B cell (primary cell): ENCODE measurements at regions of chr17 and their contacts with region 1.

Region 1: DNA sequence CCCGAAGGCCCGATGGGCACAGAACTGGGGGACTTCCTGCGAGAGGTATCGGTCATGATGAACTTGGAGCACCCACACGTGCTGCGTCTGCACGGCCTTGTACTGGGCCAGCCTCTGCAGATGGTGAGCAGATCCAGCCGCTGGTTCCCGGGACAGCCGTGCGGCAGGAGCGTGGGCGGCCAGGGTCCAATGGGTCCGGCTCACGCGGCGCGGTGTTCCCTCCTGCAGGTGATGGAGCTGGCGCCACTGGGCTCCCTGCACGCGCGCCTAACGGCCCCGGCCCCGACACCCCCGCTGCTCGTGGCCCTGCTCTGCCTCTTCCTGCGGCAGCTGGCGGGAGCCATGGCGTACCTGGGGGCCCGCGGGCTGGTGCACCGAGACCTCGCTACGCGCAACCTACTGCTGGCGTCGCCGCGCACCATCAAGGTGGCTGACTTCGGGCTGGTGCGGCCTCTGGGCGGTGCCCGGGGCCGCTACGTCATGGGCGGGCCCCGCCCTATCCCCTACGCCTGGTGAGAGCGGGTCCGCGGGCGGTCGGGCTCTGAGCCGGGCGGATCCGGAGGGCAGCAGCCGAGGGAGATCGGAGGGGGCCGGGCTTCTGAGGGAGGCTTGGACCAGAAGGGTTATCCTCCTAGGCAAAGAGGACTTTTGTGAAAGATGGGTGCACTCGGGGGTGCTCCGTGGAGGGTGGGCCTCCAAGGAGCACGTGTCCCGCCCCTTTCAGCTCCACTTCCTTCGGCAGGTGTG is 3.0 kb downstream of the TNK1 start:
- DNase-seq: peak; percentile 91
- ATAC-seq: peak; percentile 97
- H3K4me3 ChIP-seq: peak overlapping the region in 4 of 5 experiments; percentile 70 to 78 (median 76)
- H3K4me3 Mint-ChIP-seq: peak overlapping the region; percentile 89
- H3K27ac ChIP-seq: peak overlapping the region; percentile 60 to 72
- H3K27ac Mint-ChIP-seq: peak overlapping the region; percentile 91
- H3K4me1 ChIP-seq: peaks cover 19% of the 10 kb centered on the region in 2 donors
- H3K4me1 Mint-ChIP-seq: peaks cover 14% of the 10 kb centered on the region
- H3K27me3 ChIP-seq: peaks cover 0 to 43% (median 14%) of the 10 kb centered on the region in 4 experiments
- H3K27me3 Mint-ChIP-seq: peaks cover 32% of the 10 kb centered on the region
- CTCF ChIP-seq: no peak

Region 2: GRCh38 chr17:7394452-7395191 is 10.7 kb after region 1 on chr17 and contains the start of gene PLSCR3:
- CTCF ChIA-PET with region 1: no interaction called
- POLR2A ChIA-PET with region 1: interaction called, 4 read pairs
- intact Hi-C with region 1: loop called (anchors 1 kb)
- DNase-seq: peak; percentile 90
- ATAC-seq: peak; percentile 89
- H3K4me3 ChIP-seq: peak within 1 kb of the TSS; percentile 31 to 84 (median 81)
- H3K4me3 Mint-ChIP-seq: peak within 1 kb of the TSS; percentile 96
- H3K27ac ChIP-seq: peak within 1 kb of the TSS; percentile 55 to 83
- H3K27ac Mint-ChIP-seq: peak within 1 kb of the TSS; percentile 95
- H3K4me1 ChIP-seq: peaks cover 12 to 16% of the 10 kb centered on the region in 2 donors
- H3K4me1 Mint-ChIP-seq: peaks cover 12% of the 10 kb centered on the region
- H3K27me3 ChIP-seq: no peaks in the 10 kb centered on the region
- H3K27me3 Mint-ChIP-seq: no peaks in the 10 kb centered on the region
- CTCF ChIP-seq: peak; percentile 20
- total RNA-seq, gene PLSCR3: 31.1 and 31.6 TPM in 2 replicates